HEK293 (cell line): ENCODE measurements at regions of chr11 and their contacts with region 1.

Region 1: DNA sequence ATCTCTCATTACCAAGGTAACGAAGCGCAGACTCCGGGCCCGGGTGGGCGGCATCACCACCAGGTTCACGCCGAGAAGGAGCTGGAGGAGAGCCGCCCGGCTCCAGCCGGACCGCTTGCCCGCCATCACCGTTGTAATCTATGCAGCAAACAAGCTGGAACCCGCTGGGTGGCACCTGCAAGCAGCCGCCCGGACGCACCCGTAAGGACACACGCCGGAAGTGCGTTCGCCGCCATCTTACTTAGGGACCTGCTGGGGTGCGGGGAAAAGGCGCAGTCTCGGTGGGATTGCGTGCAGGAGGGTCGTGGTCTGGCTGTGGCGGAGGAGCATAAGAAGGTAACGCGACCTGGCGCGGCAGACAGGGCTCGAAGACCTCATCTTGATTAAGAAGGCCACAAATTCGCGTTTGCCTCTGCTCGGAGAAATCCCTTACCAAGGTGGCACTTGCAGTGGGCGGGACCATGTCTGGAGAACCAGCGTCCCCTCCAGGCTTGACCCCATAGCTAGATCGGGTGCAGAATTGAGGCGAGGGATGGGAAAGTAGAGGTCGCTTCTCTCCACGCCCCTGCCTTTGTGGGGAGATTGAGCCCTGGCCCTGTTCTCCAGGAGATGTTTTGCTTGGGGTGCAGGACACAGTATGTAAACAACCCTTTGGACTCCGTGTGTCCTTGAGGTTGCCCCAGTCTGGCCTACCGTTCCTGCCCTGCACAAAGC is at the start of gene ACP2:
- H3K4me3 ChIP-seq: peak within 1 kb of the TSS; percentile 72
- H3K27ac ChIP-seq: peak within 1 kb of the TSS; percentile 50
- H3K4me1 ChIP-seq: no peaks in the 10 kb centered on the region
- CTCF ChIP-seq: peak; percentile 65

Region 2: DNA sequence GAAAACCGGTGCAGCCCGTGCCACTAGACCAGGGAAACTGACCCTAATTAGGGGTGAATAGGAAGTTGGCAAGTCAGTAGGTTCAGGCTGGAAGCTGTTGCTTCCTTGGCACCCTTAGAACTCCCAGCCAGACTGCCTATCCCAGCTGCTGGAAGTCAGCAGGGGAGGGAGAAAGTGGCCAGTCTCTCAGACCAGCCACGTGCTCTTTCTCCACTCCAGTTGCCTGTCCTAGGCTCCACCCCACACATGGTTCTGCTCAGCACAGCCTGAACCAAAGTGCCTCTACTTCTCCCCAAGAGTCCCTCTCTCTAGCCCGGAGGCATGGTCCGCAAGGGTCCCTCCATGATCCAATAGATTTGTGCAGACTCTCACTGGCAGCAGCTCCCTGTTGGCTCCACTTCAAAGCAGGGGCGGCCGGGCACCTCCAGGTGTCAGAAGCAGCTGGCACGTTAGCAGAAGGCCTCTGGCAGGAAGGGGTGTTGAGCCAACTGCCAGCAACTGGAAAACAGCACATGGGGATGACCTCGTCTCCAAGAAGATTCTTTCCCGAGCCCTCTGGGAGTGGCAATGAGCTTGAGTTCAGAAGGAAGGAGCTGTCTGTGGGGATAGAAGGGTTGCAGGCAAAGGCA is 99.8 kb before region 1 on chr11:
- CTCF ChIA-PET with region 1: no interaction called
- POLR2A ChIA-PET with region 1: no interaction called
- H3K4me3 ChIP-seq: no peak overlapping the region
- H3K27ac ChIP-seq: no peak overlapping the region
- H3K4me1 ChIP-seq: no peaks in the 10 kb centered on the region
- CTCF ChIP-seq: no peak

Region 3: GRCh38 chr11:47176328-47177228 is 72.2 kb before region 1 on chr11 and contains the start of gene ARFGAP2:
- CTCF ChIA-PET with region 1: interaction called, 19 read pairs
- POLR2A ChIA-PET with region 1: interaction called, 6 read pairs
- H3K4me3 ChIP-seq: peak within 1 kb of the TSS; percentile 97
- H3K27ac ChIP-seq: peak within 1 kb of the TSS; percentile 70
- H3K4me1 ChIP-seq: no peaks in the 10 kb centered on the region
- CTCF ChIP-seq: no peak; the same call in 1 of the 2 replicates

Region 4: DNA sequence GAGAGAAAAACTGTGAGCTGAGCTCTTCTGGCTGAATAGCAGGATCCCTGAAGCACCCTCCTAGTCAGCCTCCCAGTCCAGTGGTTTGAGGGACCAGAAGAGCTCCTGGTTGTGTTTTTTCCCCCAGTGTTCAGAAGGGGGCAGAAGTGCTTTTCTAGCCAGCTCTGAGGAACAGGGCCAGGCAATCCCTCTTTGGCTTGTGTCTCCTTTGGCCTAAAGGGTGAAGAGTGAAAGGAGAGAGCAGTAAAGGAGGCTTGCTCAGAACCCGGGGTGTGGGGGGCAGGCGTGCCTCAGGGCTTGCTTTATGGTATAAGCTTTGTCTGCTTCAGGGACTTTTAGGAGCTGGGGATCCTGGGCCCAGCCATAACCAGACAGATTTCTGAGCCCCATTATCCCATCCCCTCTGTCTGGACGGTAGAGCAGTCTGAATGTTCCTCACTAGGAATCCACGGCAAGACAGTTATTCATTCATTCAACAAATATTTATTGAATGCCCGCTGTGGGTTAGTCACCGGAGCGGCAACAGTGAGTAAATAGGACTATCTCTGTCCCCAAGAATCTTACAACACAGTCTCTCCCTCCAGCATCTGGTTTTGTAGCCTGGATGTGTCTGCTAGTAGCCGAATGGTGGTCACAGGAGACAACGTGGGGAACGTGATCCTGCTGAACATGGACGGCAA is 14.7 kb before region 1 on chr11:
- CTCF ChIA-PET with region 1: interaction called, 4 read pairs
- POLR2A ChIA-PET with region 1: interaction called, 61 read pairs
- H3K4me3 ChIP-seq: no peak overlapping the region
- H3K27ac ChIP-seq: no peak overlapping the region
- H3K4me1 ChIP-seq: no peaks in the 10 kb centered on the region
- CTCF ChIP-seq: no peak